ENCODE measurements at regions of chr10 and their contacts with region 1.

Region 1: GRCh38 chr10:88835096-88835909 is 16.3 kb downstream of the ANKRD22 start:
- DNase-seq: peak; percentile 59
- ATAC-seq: peak; percentile 96
- H3K4me3 ChIP-seq: no peak overlapping the region
- H3K27ac ChIP-seq: no peak overlapping the region
- H3K4me1 ChIP-seq: peaks cover 11% of the 10 kb centered on the region
- H3K27me3 ChIP-seq: no peaks in the 10 kb centered on the region
- CTCF ChIP-seq: peak; percentile 78 to 97 (median 91)
- EP300 ChIP-seq: no peak
- POLR2A ChIP-seq: no peak
- RAD21 ChIP-seq: peak; percentile 99

Region 2: DNA sequence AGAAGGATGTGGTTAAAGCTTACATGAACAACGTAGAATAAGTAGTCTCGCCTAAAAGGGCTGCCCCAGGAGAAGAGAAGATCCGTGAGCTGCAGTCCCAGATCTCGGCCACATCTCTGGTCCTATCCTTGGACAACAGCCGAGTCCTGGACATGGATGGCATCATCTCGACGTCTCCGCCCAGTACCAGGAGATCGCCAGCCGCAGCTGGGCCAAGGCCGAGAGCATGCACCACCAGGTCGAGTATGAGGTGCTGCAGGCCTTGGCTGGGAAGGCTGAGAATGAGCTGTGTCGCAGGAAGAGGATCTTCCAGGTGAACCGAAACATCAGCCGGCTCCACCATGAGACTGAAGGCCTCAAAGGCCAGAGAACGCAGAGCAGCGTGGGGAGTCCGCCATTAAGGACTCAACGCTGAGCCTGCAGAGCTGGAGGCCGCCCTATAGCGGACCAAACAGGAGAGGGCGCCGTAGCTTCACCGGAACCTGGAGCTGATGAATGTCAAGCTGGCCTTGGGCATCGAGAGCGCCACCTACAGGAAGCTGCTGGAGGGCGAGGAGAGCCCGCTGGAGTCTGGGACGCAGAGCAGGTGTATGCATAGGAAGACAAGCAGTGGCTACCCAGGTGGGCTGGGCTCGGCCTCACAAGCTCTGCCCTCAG is 107.1 kb before region 1 on chr10:
- CTCF ChIA-PET with region 1: interaction called, 27 read pairs
- POLR2A ChIA-PET with region 1: no interaction called
- RAD21 ChIA-PET with region 1: interaction called, 5 read pairs
- SMC1A ChIA-PET with region 1: interaction called, 8 read pairs
- in situ Hi-C with region 1: no loop called
- intact Hi-C with region 1: no loop called
- DNase-seq: no peak
- ATAC-seq: peak; percentile 53
- H3K4me3 ChIP-seq: no peak overlapping the region
- H3K27ac ChIP-seq: no peak overlapping the region
- H3K4me1 ChIP-seq: peaks cover 3% of the 10 kb centered on the region
- H3K27me3 ChIP-seq: no peaks in the 10 kb centered on the region
- CTCF ChIP-seq: peak; percentile 39 to 65 (median 51); a peak in 5 of 6 replicates
- EP300 ChIP-seq: no peak
- POLR2A ChIP-seq: no peak
- RAD21 ChIP-seq: peak; percentile 79

Region 3: DNA sequence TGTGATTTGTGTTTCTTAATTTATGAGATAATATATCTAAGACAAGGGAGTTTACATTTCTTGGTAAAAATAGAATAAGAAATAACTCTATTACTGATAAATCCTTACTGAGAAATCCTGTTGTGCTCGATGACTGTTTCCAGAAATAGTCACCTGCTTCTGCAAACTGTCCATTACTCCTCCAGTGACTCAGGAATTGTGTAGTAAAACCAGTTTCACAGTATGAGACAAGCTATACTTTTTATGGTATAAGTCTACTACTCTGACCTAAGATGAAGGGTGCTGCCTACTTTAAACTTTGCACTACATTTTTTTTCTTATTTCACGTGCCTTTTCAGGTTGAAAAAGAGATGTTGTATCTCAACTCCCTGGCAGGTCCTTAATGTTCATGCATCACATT is 23.2 kb after region 1 on chr10:
- CTCF ChIA-PET with region 1: interaction called, 160 read pairs
- POLR2A ChIA-PET with region 1: no interaction called
- RAD21 ChIA-PET with region 1: interaction called, 18 read pairs
- SMC1A ChIA-PET with region 1: interaction called, 82 read pairs
- in situ Hi-C with region 1: no loop called
- intact Hi-C with region 1: no loop called
- DNase-seq: no peak
- ATAC-seq: no peak
- H3K4me3 ChIP-seq: no peak overlapping the region
- H3K27ac ChIP-seq: no peak overlapping the region
- H3K4me1 ChIP-seq: no peaks in the 10 kb centered on the region
- H3K27me3 ChIP-seq: no peaks in the 10 kb centered on the region
- CTCF ChIP-seq: no peak
- EP300 ChIP-seq: no peak
- POLR2A ChIP-seq: no peak
- RAD21 ChIP-seq: no peak

Region 4: GRCh38 chr10:88901206-88901983 is 66.1 kb after region 1 on chr10:
- CTCF ChIA-PET with region 1: interaction called, 93 read pairs
- POLR2A ChIA-PET with region 1: interaction called, 11 read pairs
- RAD21 ChIA-PET with region 1: interaction called, 67 read pairs
- SMC1A ChIA-PET with region 1: interaction called, 111 read pairs
- in situ Hi-C with region 1: no loop called
- intact Hi-C with region 1: no loop called
- DNase-seq: peak; percentile 94
- ATAC-seq: peak; percentile 89
- H3K4me3 ChIP-seq: peak overlapping the region; percentile 26; the same call in 1 of the 2 replicates
- H3K27ac ChIP-seq: peak overlapping the region; percentile 99
- H3K4me1 ChIP-seq: peaks cover 50% of the 10 kb centered on the region
- H3K27me3 ChIP-seq: no peaks in the 10 kb centered on the region
- CTCF ChIP-seq: no peak
- EP300 ChIP-seq: peak; percentile 84 to 97
- POLR2A ChIP-seq: no peak
- RAD21 ChIP-seq: peak; percentile 15; the same call in 1 of the 2 replicates

Region 5: GRCh38 chr10:88983206-88983605 is 147.9 kb after region 1 on chr10:
- CTCF ChIA-PET with region 1: interaction called, 52 read pairs
- POLR2A ChIA-PET with region 1: no interaction called
- RAD21 ChIA-PET with region 1: interaction called, 22 read pairs
- SMC1A ChIA-PET with region 1: interaction called, 71 read pairs
- in situ Hi-C with region 1: no loop called
- intact Hi-C with region 1: no loop called
- DNase-seq: no peak
- ATAC-seq: no peak
- H3K4me3 ChIP-seq: no peak overlapping the region
- H3K27ac ChIP-seq: no peak overlapping the region
- H3K4me1 ChIP-seq: peaks cover 10% of the 10 kb centered on the region
- H3K27me3 ChIP-seq: no peaks in the 10 kb centered on the region
- CTCF ChIP-seq: no peak
- EP300 ChIP-seq: no peak
- POLR2A ChIP-seq: no peak
- RAD21 ChIP-seq: no peak

Region 6: DNA sequence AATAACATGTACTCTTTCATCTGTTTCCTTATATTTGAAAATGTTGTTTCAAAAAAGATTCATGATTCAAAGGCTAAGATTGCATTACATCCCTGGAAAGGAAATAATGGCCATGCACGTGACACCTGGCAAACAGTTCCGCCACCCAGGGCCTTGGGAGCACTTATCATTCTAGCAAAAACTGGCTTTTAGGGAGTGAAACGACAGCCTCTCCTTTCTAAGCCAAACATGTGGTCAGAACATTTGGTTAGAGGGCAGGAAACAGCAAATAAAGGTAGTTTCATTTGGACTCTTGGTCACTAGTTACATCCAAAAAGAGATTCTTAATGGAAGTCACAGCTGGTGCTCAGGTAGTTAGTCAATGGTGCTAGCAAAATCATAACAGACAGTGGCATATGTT is 238.8 kb after region 1 on chr10:
- CTCF ChIA-PET with region 1: no interaction called
- POLR2A ChIA-PET with region 1: no interaction called
- RAD21 ChIA-PET with region 1: no interaction called
- SMC1A ChIA-PET with region 1: no interaction called
- in situ Hi-C with region 1: no loop called
- intact Hi-C with region 1: no loop called
- DNase-seq: no peak
- ATAC-seq: 0 out of 3 replicates have a peak, but pooled peaks have one; percentile 22
- H3K4me3 ChIP-seq: no peak overlapping the region
- H3K27ac ChIP-seq: no peak overlapping the region
- H3K4me1 ChIP-seq: peaks cover 3% of the 10 kb centered on the region; the same call in 1 of the 2 replicates
- H3K27me3 ChIP-seq: no peaks in the 10 kb centered on the region
- CTCF ChIP-seq: no peak
- EP300 ChIP-seq: no peak
- POLR2A ChIP-seq: no peak
- RAD21 ChIP-seq: no peak

Region 7: DNA sequence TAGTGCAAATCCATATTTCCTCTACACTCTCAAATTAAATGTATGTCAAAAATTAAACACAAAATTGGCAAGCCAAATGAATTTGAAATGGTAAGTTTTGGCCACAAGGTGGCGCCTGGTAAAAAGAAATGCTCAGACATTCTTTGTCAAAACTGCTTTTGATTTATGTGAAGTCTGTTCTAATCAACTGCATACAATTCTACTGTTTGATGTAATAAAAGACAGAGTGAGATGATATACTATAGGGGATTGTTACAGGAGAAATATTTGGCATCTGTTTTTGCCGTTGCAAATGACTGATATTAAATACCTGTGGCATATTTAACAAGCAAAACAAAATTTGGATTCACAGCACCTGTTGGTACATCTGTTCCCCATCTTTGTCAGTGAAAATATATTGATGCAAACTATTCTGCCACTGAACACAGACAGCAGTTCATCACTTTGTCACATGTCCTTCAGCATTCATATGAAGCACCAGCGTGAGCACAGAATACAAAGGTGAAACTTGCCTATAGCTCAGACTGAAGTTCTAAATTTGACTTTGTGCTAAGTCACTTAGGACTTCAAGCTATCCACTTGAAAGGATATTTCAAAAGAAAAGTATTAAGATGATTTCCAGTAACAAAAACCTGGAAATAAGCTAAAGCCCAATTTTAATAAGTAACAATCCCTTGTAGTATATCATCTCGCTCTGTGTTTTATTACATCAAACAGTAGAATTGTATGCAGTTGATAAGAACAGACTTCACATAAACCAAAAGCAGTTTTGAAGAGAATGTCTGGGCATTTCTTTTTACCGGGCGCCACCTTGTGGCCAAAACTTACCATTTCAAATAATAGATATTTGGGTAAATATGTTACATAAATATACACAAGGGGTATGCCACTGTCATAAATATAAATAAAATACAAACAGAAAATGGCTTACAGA is 382.0 kb after region 1 on chr10:
- CTCF ChIA-PET with region 1: interaction called, 38 read pairs
- POLR2A ChIA-PET with region 1: no interaction called
- RAD21 ChIA-PET with region 1: interaction called, 7 read pairs
- SMC1A ChIA-PET with region 1: interaction called, 32 read pairs
- in situ Hi-C with region 1: loop called (anchors 5 kb)
- intact Hi-C with region 1: loop called (anchors 5 kb)
- DNase-seq: peak; percentile 12
- ATAC-seq: peak; percentile 83
- H3K4me3 ChIP-seq: no peak overlapping the region
- H3K27ac ChIP-seq: no peak overlapping the region
- H3K4me1 ChIP-seq: peaks cover 3% of the 10 kb centered on the region; the same call in 1 of the 2 replicates
- H3K27me3 ChIP-seq: no peaks in the 10 kb centered on the region
- CTCF ChIP-seq: peak; percentile 50 to 66 (median 64)
- EP300 ChIP-seq: no peak
- POLR2A ChIP-seq: no peak
- RAD21 ChIP-seq: peak; percentile 77

Measured in GM12878 (cell line).